HEK293 (cell line): ENCODE measurements at regions of chr1 and their contacts with region 1.

Region 1: GRCh38 chr1:229452956-229453801 is 19.3 kb upstream of the ACTA1 start:
- H3K4me3 ChIP-seq: no peak overlapping the region
- H3K27ac ChIP-seq: no peak overlapping the region
- H3K4me1 ChIP-seq: no peaks in the 10 kb centered on the region
- CTCF ChIP-seq: peak; percentile 75

Region 2: DNA sequence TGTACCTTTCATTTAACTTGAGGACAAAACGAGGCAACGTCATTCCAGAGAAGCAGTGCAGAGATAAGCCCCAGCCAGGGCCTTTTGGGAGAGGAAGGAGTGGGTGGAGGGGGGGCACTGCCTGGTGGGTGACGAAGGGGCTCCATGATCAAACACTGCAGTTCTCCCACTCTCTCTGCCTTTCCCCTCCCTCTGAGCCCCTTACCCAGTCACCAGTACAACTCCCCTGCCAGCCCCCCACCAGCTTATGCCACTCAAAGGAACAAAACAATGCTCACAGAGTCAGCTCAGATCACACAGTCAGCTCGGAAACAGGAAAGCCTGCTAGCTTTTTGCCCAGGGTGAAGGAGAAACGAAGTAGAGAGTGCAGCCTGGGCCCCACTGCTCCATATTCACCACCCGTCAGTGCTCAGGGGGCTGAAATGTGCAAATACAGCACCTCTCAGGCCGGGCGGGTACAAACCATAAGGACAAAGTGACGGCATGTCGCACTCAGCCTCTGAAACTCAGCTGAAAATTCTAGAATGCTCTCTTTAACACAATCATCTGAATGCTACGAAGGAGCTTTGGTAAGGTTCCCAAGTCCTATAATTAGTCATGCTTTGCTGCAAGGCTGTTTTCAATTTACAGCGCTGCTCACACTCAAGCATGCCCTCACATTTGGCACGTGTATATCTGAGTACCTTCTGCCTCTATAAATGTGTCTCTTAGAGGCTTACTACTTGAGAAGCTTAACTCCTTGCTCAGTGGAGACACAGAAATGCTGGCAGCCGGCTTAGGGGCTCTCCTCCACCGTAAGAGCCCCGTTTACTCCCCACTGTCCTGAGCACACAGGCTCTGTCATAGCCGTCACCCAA is 248.0 kb before region 1 on chr1:
- CTCF ChIA-PET with region 1: no interaction called
- POLR2A ChIA-PET with region 1: no interaction called
- H3K4me3 ChIP-seq: no peak overlapping the region
- H3K27ac ChIP-seq: no peak overlapping the region
- H3K4me1 ChIP-seq: no peaks in the 10 kb centered on the region; the same call in 1 of the 2 replicates
- CTCF ChIP-seq: no peak

Region 3: DNA sequence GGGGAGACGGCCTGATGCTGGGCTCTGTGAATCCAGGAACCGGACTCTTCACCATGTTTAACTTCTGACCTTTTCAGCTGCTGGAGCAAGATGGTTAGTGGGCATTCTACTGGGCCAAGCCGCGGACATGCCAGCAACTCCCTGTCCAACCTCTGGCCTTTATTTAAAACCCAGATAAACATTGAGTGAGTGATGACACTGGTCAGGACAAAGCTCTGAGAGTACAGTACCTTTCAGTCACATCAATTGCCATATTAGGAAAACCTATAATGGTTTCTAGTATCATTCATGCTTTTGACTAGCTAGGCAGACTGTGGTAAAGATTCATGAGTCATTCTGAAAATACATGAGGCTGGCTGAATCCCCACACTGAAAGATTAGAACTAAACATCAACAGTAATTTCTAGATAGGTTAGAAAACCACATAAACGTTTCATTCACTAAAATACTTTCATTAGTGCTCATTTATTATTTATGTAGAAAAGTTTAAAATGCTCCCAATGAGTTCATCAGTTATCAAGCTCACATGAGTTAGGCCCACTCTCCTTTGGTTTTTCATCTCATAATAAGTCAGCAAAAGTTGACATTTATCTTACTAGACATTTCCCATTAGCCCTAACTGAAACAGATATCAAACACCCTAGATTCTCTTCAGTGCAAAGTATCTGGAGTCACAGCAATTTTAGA is 12.2 kb before region 1 on chr1:
- CTCF ChIA-PET with region 1: interaction called, 18 read pairs
- POLR2A ChIA-PET with region 1: interaction called, 3 read pairs
- H3K4me3 ChIP-seq: no peak overlapping the region
- H3K27ac ChIP-seq: no peak overlapping the region
- H3K4me1 ChIP-seq: no peaks in the 10 kb centered on the region
- CTCF ChIP-seq: no peak